Activated CD4-positive, alpha-beta memory T cell treated with anti-CD3 and anti-CD28 coated beads for 36 hours (primary cell): ENCODE measurements at regions of chr7 and their contacts with region 1.

Region 1: GRCh38 chr7:106153891-106154449 is 41.9 kb upstream of the SYPL1 start:
- DNase-seq: peak; percentile 82
- H3K4me3 Mint-ChIP-seq: no peak overlapping the region
- H3K27ac Mint-ChIP-seq: no peak overlapping the region
- H3K4me1 Mint-ChIP-seq: peaks cover 3% of the 10 kb centered on the region
- H3K27me3 Mint-ChIP-seq: peaks cover 20% of the 10 kb centered on the region

Region 2: GRCh38 chr7:106050011-106050745 is 103.8 kb before region 1 on chr7:
- CTCF ChIA-PET with region 1: interaction called, 177 read pairs
- POLR2A ChIA-PET with region 1: no interaction called
- intact Hi-C with region 1: no loop called
- DNase-seq: no peak
- H3K4me3 Mint-ChIP-seq: no peak overlapping the region
- H3K27ac Mint-ChIP-seq: no peak overlapping the region
- H3K4me1 Mint-ChIP-seq: no peaks in the 10 kb centered on the region
- H3K27me3 Mint-ChIP-seq: no peaks in the 10 kb centered on the region

Region 3: DNA sequence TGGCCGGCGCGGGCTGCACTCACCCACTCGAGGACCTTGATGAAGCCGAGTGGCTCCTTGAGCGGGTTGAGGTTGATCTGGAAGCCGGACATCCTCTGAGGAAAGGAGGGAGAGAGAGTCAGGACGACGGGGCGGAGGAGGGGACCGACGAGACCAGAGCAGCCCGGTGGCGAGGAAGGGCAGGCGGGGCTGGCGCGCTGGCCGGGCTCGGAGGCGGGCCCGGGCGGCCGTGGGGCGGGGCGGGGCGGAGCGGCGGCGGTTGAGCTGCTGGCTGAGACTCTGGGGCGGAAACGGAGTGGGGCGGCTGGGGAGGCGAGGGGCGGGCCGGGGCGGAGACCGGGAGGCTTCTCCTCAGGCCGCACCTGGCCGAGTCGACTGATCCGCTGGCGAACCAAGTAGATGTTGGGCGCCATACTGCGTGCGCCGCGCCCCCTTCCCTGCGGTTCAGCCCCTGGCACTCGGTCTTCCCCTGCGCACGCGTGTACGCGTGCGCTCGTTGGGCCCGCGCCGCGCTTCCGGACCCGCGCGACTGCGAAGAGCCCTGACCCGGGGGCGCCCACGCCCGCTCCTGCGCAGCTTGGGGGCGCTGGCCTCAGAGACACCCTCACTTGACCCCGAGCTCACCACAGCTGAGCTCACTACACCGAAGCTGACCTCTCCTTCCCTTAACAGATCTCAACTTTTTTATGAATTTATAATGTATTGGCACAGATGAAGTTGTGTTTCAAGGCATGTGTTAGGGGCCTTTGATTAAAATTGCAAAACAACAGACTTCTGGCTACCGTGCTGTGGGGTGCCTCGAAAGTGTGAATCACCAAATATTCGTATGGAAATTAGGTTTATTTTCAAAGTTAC is 41.6 kb before region 1 on chr7 and contains the start of gene SYPL1:
- CTCF ChIA-PET with region 1: interaction called, 15 read pairs
- POLR2A ChIA-PET with region 1: no interaction called
- intact Hi-C with region 1: no loop called
- DNase-seq: peak; percentile 95
- H3K4me3 Mint-ChIP-seq: peak within 1 kb of the TSS; percentile 85
- H3K27ac Mint-ChIP-seq: peak within 1 kb of the TSS; percentile 89
- H3K4me1 Mint-ChIP-seq: peaks cover 58% of the 10 kb centered on the region
- H3K27me3 Mint-ChIP-seq: no peaks in the 10 kb centered on the region
- total RNA-seq, gene SYPL1: 27.4 to 29.1 TPM

Region 4: GRCh38 chr7:106134241-106134640 is 19.7 kb before region 1 on chr7:
- CTCF ChIA-PET with region 1: interaction called, 13 read pairs
- POLR2A ChIA-PET with region 1: no interaction called
- intact Hi-C with region 1: no loop called
- DNase-seq: no peak
- H3K4me3 Mint-ChIP-seq: no peak overlapping the region
- H3K27ac Mint-ChIP-seq: no peak overlapping the region
- H3K4me1 Mint-ChIP-seq: no peaks in the 10 kb centered on the region
- H3K27me3 Mint-ChIP-seq: peaks cover 6% of the 10 kb centered on the region